Dendritic cell treated with granulocyte-macrophage colony-stimulating factor and Interleukin-4, amounts not matched to agents 40 ng/mL and 50 ng/mL, for 4 days (primary cell): ENCODE measurements at regions of chr5 and their contacts with region 1.

Region 1: DNA sequence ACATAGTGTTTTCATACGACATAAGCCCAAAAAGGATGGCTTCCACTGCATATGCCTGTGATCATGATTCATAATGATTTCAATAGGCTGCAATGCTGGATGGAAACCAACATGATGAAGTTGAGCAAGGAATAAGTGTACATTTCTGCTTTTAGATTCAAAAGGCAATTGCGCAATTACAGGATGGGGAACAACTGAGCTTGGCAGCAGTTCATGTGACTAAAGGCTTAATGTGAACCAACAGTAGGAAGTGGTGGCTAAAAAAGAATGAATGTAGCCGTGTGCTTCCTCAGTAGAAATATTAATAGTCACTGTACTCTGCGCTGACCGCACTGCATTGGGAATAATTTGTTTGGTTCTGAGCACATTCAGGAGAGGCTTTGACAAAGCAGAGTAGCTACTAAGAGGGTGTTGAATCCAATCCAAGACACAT is 51.2 kb downstream of the SLC1A3 start:
- H3K4me3 Mint-ChIP-seq: peak overlapping the region; percentile 26
- H3K27ac Mint-ChIP-seq: peak overlapping the region; percentile 92
- H3K4me1 Mint-ChIP-seq: peaks cover 44% of the 10 kb centered on the region
- H3K27me3 Mint-ChIP-seq: no peaks in the 10 kb centered on the region

Region 2: GRCh38 chr5:36241631-36242533 is 415.7 kb before region 1 on chr5 and contains the start of gene NADK2:
- intact Hi-C with region 1: loop called (anchors 5 kb)
- H3K4me3 Mint-ChIP-seq: peak within 1 kb of the TSS; percentile 89
- H3K27ac Mint-ChIP-seq: peak within 1 kb of the TSS; percentile 94
- H3K4me1 Mint-ChIP-seq: peaks cover 39% of the 10 kb centered on the region
- H3K27me3 Mint-ChIP-seq: no peaks in the 10 kb centered on the region

Region 3: DNA sequence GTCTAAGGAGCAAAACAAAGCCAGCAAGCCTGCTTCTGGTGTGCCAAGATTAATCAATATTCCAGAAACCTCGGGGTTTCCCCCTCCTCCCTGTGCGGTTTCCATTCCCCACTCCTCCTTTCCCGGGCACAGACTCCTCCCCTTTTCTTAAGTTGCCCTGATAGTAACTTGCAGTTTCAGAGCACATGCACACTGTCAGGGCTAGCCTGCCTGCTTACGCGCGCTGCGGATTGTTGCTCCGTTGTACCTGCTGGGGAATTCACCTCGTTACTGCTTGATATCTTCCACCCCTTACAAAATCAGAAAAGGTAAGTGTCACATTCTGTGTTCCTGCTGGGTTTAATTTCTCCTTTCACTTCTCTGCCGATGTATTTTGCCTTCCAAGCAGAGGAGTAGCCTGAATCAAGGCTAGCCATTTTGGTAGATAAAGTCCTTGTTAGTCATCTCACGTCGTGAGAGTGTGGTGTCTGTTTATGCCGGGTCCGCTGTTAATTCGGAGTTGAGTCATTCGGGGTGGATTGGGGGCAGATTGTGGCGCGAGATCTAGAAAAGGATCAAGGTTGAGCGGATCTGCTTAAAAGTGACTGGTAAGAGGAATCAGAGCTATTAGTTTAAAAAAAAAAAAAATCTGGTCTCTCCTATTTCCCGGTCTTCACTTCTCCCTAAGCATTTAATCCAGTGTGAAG is 51.0 kb before region 1 on chr5 and contains the start of gene SLC1A3:
- intact Hi-C with region 1: loop called (anchors 5 kb)
- H3K4me3 Mint-ChIP-seq: peak within 1 kb of the TSS; percentile 91
- H3K27ac Mint-ChIP-seq: peak within 1 kb of the TSS; percentile 92
- H3K4me1 Mint-ChIP-seq: peaks cover 19% of the 10 kb centered on the region
- H3K27me3 Mint-ChIP-seq: no peaks in the 10 kb centered on the region

Region 4: DNA sequence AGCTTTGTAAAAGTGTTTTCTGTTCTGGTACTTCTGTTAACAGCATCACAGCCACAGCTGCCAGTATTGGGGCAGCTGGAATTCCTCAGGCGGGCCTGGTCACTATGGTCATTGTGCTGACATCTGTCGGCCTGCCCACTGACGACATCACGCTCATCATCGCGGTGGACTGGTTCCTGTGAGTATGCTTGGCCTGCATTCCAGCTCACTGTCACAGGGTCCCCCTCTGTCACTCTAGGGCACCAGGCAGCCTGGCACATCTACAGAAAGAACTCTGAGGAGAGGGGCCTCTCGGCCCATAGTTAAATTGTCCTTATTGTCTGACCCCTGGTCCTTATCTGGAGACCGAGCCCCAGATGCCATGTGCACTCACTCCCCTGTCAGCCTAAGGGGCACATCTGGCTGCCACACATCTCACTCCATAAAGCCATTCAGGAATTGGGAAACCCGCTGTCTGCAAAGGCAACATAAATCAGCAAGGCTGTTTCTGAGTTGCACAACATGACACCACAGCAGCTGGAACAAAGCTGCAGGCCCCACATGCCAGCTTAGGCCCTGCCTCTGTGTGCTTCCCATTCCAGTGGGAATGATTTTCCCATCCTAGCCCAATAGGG is 26.3 kb after region 1 on chr5:
- intact Hi-C with region 1: loop called (anchors 2 kb)
- H3K4me3 Mint-ChIP-seq: no peak overlapping the region
- H3K27ac Mint-ChIP-seq: peak overlapping the region; percentile 63
- H3K4me1 Mint-ChIP-seq: peaks cover 57% of the 10 kb centered on the region
- H3K27me3 Mint-ChIP-seq: no peaks in the 10 kb centered on the region